Activated CD8-positive, alpha-beta T cell treated with anti-CD3 and anti-CD28 coated beads for 36 hours (primary cell): ENCODE measurements at regions of chr1 and their contacts with region 1.

Region 1: DNA sequence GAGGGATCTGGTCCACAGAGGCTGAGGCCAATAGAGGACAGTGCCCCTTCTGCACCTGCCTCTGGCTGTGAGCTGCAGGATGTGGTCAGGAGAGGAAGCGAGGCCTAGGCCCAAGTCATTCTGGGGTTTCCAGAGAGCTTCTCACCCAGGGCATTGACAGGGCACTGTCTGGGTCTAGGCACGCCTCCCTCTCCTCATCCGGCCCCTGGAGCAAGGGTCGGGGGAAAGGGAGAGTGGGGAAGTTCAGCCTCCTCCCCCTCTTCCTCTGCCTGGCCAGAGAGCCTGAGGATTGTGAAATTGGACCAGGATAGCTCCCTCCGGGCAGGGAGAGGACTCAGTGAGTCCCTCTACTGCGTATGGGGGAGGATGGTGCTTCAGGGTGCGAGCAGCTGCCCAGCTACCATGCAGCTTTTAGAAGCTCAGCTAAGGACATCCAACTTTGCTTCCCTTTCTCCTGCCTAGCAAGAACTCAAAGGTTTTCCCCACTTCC is 6.3 kb upstream of the INAVA start:
- DNase-seq: peak; percentile 86
- ATAC-seq: peak; percentile 88
- H3K4me3 Mint-ChIP-seq: peak overlapping the region; percentile 29
- H3K27ac Mint-ChIP-seq: no peak overlapping the region
- H3K4me1 Mint-ChIP-seq: peaks cover 58% of the 10 kb centered on the region
- H3K27me3 Mint-ChIP-seq: peaks cover 26% of the 10 kb centered on the region
- CTCF ChIP-seq: no peak

Region 2: DNA sequence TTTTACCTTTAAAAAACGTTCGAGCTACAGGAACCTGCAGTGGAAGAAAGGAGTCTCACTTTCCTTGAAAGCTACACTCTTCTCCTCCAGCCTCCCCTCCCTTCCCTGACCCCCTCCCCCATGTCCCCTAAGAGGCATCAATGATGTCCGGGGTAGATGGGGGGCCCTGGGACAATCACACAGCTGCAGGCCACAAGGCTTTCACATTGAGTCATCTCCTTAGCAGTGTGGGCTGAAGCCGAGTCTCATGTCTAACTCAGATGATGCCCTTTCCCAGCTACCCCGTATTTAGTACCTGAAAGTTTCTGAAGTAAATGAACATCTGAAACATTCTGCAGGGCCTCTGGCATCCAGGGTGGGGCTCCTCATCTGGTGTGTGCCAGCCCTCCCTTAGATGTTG is 21.9 kb before region 1 on chr1:
- CTCF ChIA-PET with region 1: interaction called, 4 read pairs
- POLR2A ChIA-PET with region 1: interaction called, 13 read pairs
- intact Hi-C with region 1: no loop called
- DNase-seq: peak; percentile 92
- ATAC-seq: peak; percentile 86
- H3K4me3 Mint-ChIP-seq: no peak overlapping the region
- H3K27ac Mint-ChIP-seq: no peak overlapping the region
- H3K4me1 Mint-ChIP-seq: peaks cover 55% of the 10 kb centered on the region
- H3K27me3 Mint-ChIP-seq: peaks cover 14% of the 10 kb centered on the region
- CTCF ChIP-seq: no peak

Region 3: DNA sequence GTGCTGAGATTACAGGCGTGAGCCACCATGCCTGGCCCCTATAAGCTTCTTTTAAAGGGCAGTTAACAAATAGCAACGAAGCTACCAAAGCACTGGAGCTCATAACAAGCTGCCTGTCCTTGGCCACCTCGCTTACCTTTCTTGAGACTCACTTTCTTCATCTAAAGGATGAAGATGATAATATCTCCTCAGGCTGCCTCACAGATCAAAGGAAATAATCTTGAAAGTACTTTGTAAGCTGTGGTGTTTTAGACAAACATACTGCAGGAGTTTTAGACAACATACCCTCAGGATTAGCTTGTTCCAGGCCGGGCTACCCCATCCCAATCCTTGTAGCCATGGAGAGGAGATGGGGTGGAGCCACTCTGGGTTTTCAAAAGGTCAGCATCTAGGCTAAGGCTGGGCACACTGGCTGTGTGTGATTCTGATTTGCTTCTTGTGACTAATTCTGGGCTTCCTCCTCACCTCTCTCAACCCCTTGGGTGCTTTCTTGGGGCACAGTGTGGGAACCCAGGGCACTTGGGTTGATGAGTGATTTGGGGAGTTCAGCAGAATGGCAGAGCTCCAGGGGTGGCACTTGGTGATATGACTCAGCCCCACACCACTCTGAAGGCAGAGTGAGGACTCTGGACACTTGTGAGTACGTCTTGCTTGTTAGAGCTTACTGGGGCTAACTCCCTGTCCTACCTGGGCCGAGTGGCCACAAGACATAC is 10.4 kb before region 1 on chr1:
- CTCF ChIA-PET with region 1: interaction called, 6 read pairs
- POLR2A ChIA-PET with region 1: interaction called, 29 read pairs
- intact Hi-C with region 1: no loop called
- DNase-seq: peak; percentile 83
- ATAC-seq: peak; percentile 83
- H3K4me3 Mint-ChIP-seq: no peak overlapping the region
- H3K27ac Mint-ChIP-seq: no peak overlapping the region
- H3K4me1 Mint-ChIP-seq: peaks cover 32% of the 10 kb centered on the region
- H3K27me3 Mint-ChIP-seq: peaks cover 29% of the 10 kb centered on the region
- CTCF ChIP-seq: no peak

Region 4: DNA sequence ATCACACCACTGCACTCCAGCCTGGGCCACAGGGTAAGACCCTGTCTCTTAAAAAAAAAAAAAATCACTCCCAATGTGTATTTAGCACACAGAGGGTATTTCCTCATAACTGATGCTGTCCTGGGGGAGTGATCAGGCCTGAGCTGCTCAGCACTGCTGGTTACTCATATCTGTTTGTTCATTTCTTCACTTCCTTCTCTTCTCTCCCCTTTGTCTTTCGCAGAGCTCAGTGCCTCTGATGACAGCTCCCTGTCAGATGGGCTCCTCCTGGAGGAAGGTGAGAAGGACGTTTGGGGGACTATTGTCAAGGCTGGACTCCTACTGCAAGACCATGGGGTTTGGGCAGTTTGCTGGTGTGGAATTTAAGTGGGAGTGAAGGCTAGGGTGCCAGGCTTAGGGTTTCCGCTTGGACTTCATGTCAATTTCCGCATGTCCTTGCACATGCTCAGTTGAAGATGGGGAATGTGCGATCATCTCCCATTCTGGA is 19.3 kb after region 1 on chr1:
- CTCF ChIA-PET with region 1: interaction called, 3 read pairs
- POLR2A ChIA-PET with region 1: interaction called, 3 read pairs
- intact Hi-C with region 1: loop called (anchors 2 kb)
- DNase-seq: no peak
- ATAC-seq: no peak
- H3K4me3 Mint-ChIP-seq: no peak overlapping the region
- H3K27ac Mint-ChIP-seq: no peak overlapping the region
- H3K4me1 Mint-ChIP-seq: peaks cover 11% of the 10 kb centered on the region
- H3K27me3 Mint-ChIP-seq: peaks cover 8% of the 10 kb centered on the region
- CTCF ChIP-seq: no peak